ENCODE measurements at regions of chr11 and their contacts with region 1.

Region 1: DNA sequence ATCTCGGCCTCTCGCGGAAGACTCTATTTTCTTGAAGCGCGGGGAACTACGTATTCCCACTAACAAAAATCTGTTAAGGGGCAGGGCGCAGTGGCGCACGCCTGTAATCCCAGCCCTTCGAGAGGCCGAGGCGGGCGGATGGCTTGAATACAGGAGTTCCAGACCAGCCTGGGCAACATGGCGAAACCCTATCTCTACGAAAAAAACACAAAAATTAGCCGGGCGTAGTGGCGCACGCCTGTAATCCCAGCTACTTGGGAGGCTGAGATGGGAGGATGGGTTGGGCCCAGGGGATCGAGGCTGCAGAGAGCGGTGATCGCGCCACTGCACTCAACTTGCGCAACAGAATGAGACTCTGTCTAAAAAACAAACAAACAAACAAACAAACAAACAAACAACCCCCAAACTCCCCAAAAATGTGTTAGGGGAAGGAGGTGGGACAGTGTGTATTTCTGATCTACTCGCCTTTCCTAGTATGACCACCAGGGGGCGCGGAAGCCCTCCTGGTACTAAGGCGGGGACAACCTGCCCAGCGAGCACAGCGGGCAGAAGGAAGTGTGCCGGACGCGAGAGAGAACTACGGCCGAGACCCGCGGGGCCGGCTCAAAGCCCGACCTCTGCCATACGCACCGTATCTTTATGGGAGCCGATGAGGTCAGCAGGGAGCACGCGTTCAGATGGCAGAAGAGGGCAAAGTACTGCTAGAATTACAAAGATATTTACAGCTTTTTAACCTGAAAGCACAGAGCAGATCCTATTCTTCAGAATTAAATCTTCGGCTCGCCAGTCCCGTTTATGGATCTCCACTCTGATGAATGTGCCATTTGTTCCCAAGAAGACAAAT is 1.3 kb upstream of the STX3 start:
- DNase-seq: peak; percentile 92
- ATAC-seq: peak; percentile 79
- H3K4me3 Mint-ChIP-seq: peak overlapping the region; percentile 84
- H3K27ac Mint-ChIP-seq: peak overlapping the region; percentile 53
- H3K4me1 Mint-ChIP-seq: peaks cover 15% of the 10 kb centered on the region
- H3K27me3 Mint-ChIP-seq: peaks cover 6% of the 10 kb centered on the region

Region 2: DNA sequence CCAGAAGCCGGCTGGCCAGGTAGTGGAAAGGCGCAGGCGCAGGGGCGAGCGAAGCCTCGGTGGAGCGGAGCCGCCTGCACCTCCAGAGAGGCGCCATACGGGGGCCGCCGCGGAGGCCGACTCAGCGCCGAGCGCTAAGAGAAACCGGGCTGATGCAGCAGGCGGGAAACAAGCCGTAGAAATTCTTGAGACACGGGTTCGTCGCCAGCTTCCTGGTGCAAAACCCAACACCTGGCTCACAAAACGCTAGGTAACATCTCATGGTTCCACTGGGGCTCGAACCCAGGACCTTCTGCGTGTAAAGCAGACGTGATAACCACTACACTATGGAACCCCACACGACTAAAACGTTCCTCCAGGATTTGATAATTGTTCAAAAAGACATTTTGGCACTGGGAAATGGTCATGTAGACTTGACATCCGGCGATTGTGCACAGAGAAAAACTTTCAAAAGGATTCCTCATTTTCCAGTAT is 203.5 kb before region 1 on chr11:
- CTCF ChIA-PET with region 1: no interaction called
- POLR2A ChIA-PET with region 1: no interaction called
- intact Hi-C with region 1: loop called in 1 of 2 experiments (anchors 2 kb)
- DNase-seq: peak; percentile 95
- ATAC-seq: peak; percentile 91
- H3K4me3 Mint-ChIP-seq: peak overlapping the region; percentile 79
- H3K27ac Mint-ChIP-seq: peak overlapping the region; percentile 96
- H3K4me1 Mint-ChIP-seq: peaks cover 28% of the 10 kb centered on the region
- H3K27me3 Mint-ChIP-seq: peaks cover 2% of the 10 kb centered on the region

Region 3: GRCh38 chr11:59668950-59669610 is 84.8 kb before region 1 on chr11 and contains the start of gene PATL1:
- CTCF ChIA-PET with region 1: interaction called, 8 read pairs
- POLR2A ChIA-PET with region 1: interaction called, 3 read pairs
- intact Hi-C with region 1: loop called (anchors 1 to 2 kb)
- DNase-seq: peak; percentile 99
- ATAC-seq: peak; percentile 93
- H3K4me3 Mint-ChIP-seq: peak within 1 kb of the TSS; percentile 81
- H3K27ac Mint-ChIP-seq: peak within 1 kb of the TSS; percentile 92
- H3K4me1 Mint-ChIP-seq: peaks cover 37% of the 10 kb centered on the region
- H3K27me3 Mint-ChIP-seq: no peaks in the 10 kb centered on the region
- total RNA-seq, gene PATL1: 59.8 to 88.7 TPM

Region 4: DNA sequence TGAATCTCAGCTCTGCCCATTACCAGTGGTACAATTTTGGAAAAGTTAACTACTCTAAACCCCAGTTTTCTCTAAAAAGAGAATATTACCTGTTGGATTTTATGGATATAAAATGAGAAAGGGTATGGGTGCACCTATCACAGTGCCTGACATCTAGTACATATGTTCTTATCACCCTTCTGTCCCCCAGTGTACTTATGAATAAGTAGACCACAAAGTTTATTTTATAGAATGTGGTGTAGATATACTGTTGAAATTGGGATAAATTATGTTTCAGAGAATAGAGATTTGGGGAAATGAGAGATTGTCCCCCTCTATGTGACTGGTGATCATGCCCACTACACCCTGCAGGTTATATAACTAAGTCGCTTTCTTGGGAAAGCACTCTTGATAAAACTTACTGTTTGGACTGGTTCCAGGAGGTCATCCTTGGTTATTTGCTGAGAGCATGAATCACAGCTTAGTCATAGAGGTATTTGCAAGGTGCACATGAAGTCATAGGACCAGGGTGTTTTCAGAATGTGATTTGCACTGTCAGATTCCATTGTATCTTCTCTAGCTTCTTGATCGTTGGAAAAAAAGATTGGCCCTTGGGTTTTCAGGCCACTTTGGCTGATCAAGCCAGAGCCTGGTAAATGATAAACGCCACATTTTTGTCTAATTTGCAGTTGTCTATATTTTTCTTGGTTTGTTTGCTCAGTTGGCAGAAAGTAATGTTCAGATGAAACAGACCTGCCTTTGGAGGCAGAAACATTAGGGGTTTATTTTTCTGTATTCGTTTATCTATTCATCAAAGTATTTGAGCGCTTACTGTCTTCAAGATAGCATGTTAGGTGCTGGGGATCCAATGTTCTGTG is 22.6 kb after region 1 on chr11:
- CTCF ChIA-PET with region 1: interaction called, 13 read pairs
- POLR2A ChIA-PET with region 1: no interaction called
- intact Hi-C with region 1: loop called in 1 of 2 experiments (anchors 2 kb)
- DNase-seq: no peak
- ATAC-seq: peak; percentile 80
- H3K4me3 Mint-ChIP-seq: no peak overlapping the region
- H3K27ac Mint-ChIP-seq: no peak overlapping the region
- H3K4me1 Mint-ChIP-seq: peaks cover 29% of the 10 kb centered on the region
- H3K27me3 Mint-ChIP-seq: no peaks in the 10 kb centered on the region

Region 5: DNA sequence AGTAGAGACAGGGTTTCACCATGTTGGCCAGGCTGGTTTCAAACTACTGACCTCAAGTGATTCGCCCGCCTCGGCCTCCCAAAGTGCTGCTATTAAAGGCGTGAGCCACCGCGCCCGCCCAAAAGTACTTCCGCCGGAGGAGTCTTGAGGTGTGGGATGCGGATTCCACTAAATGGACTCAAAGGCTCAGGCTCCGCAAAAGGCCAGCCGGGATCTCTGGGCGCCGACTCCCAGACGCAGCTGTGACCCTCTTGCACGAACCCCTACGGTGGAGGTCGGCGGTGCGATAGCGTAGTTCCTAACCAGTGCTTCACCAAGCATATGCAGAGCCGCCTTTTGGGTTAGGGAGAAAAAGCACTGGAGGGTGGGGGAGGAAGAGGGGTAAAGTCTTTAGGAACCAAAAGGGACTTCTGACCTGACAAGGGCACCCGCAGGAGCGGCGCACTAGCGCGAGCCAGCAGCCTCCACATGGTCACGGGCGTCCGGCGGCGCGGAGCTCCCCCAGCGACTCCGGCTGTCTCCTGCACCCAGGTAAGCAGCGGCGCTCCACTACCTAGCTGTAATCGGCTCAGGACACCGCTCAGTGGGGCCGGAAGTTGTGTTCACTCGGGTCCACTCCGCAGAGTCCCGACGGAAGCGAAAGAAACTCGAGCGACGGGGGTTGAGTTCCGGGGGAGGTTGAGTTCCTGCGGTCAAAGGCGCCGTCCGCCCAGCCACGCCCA is 56.5 kb after region 1 on chr11 and contains the start of gene MRPL16:
- CTCF ChIA-PET with region 1: interaction called, 27 read pairs
- POLR2A ChIA-PET with region 1: interaction called, 5 read pairs
- intact Hi-C with region 1: loop called (anchors 1 to 2 kb)
- DNase-seq: peak; percentile 94
- ATAC-seq: peak; percentile 99
- H3K4me3 Mint-ChIP-seq: peak within 1 kb of the TSS; percentile 88
- H3K27ac Mint-ChIP-seq: peak within 1 kb of the TSS; percentile 88
- H3K4me1 Mint-ChIP-seq: peaks cover 18% of the 10 kb centered on the region
- H3K27me3 Mint-ChIP-seq: no peaks in the 10 kb centered on the region
- total RNA-seq, gene MRPL16: 77.9 to 82.6 TPM

Region 6: DNA sequence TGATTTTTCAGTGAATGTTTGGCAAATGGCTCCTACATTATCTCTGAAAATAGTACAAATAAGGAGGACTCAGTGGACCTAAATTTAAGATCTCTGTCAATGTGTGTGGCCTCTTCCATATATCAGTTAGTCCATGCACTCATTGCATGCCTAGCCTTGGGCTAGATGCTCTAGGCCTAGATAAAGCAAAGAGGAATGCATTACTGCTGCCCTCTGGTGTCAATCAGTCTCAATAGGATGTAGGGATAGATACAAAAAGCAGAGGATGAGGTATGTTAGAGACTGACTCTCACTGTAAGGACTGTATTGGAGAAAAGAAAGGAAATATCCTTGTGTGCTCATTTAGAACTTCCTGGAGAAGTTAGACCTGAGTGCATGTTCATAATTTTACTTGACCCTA is 376.6 kb after region 1 on chr11:
- CTCF ChIA-PET with region 1: no interaction called
- POLR2A ChIA-PET with region 1: no interaction called
- intact Hi-C with region 1: loop called (anchors 2 to 10 kb)
- DNase-seq: peak; percentile 25
- ATAC-seq: peak; percentile 71
- H3K4me3 Mint-ChIP-seq: no peak overlapping the region
- H3K27ac Mint-ChIP-seq: no peak overlapping the region
- H3K4me1 Mint-ChIP-seq: no peaks in the 10 kb centered on the region
- H3K27me3 Mint-ChIP-seq: peaks cover 2% of the 10 kb centered on the region

Measured in activated CD4-positive, alpha-beta T cell treated with anti-CD3 and anti-CD28 coated beads for 36 hours (primary cell).